Activated CD4-positive, alpha-beta memory T cell treated with anti-CD3 and anti-CD28 coated beads for 36 hours (primary cell): ENCODE measurements at regions of chr4 and their contacts with region 1.

Region 1: DNA sequence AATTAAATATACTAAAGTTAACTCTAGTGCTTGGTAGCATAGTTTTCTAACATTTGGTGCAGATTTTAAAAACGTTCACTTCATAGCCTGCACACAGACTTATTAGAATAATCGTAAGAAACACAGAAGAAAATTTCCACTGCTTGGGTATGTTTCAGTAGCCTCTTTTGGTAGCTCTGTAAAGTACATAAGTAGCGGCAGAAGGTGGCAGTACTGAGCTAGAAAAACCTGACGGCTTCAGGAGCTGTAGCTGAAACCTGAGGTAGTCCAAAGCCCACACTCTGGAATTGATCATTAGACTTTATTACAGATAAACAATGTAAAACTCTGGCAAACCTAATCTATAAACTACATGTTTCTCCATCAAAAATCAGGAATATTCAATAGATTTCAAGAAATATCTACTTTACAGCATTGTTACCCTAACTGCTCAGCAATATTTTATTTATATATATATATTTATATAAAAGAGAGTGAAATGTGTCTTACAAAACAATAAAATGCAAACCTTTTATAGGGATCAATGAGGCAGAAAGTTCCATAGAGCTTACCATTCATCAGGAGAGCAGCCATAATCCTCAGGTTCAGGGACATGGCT is 88.2 kb downstream of the ATP8A1 start:
- DNase-seq: peak; percentile 63
- H3K4me3 Mint-ChIP-seq: no peak overlapping the region
- H3K27ac Mint-ChIP-seq: no peak overlapping the region
- H3K4me1 Mint-ChIP-seq: no peaks in the 10 kb centered on the region
- H3K27me3 Mint-ChIP-seq: no peaks in the 10 kb centered on the region

Region 2: DNA sequence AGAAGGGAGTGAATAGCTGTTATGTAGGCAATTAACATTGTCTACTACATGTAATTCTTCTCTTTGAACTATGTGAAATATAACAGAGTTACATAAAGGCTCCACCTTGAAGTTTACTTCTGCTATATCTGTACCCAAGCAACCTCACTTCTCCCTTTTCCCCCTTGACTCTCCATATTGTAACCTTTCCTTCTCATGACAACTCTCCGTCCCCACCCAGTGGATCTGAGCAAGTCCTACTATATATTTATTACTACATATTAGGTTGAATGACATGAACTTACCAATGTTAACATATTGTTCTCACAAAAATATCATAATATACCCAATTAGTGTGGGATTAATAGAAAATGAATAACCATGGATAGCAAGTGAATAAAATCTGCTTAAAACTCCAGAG is 181.4 kb after region 1 on chr4:
- CTCF ChIA-PET with region 1: interaction called, 12 read pairs
- POLR2A ChIA-PET with region 1: no interaction called
- intact Hi-C with region 1: loop called (anchors 1 kb)
- DNase-seq: no peak
- H3K4me3 Mint-ChIP-seq: no peak overlapping the region
- H3K27ac Mint-ChIP-seq: no peak overlapping the region
- H3K4me1 Mint-ChIP-seq: no peaks in the 10 kb centered on the region
- H3K27me3 Mint-ChIP-seq: no peaks in the 10 kb centered on the region

Region 3: GRCh38 chr4:42768125-42768748 is 199.5 kb after region 1 on chr4:
- CTCF ChIA-PET with region 1: interaction called, 31 read pairs
- POLR2A ChIA-PET with region 1: no interaction called
- intact Hi-C with region 1: loop called (anchors 1 kb)
- DNase-seq: peak; percentile 28
- H3K4me3 Mint-ChIP-seq: no peak overlapping the region
- H3K27ac Mint-ChIP-seq: no peak overlapping the region
- H3K4me1 Mint-ChIP-seq: no peaks in the 10 kb centered on the region
- H3K27me3 Mint-ChIP-seq: peaks cover 4% of the 10 kb centered on the region

Region 4: GRCh38 chr4:42816189-42816879 is 247.6 kb after region 1 on chr4:
- CTCF ChIA-PET with region 1: interaction called, 36 read pairs
- POLR2A ChIA-PET with region 1: no interaction called
- intact Hi-C with region 1: no loop called
- DNase-seq: no peak
- H3K4me3 Mint-ChIP-seq: no peak overlapping the region
- H3K27ac Mint-ChIP-seq: no peak overlapping the region
- H3K4me1 Mint-ChIP-seq: no peaks in the 10 kb centered on the region
- H3K27me3 Mint-ChIP-seq: peaks cover 3% of the 10 kb centered on the region

Region 5: DNA sequence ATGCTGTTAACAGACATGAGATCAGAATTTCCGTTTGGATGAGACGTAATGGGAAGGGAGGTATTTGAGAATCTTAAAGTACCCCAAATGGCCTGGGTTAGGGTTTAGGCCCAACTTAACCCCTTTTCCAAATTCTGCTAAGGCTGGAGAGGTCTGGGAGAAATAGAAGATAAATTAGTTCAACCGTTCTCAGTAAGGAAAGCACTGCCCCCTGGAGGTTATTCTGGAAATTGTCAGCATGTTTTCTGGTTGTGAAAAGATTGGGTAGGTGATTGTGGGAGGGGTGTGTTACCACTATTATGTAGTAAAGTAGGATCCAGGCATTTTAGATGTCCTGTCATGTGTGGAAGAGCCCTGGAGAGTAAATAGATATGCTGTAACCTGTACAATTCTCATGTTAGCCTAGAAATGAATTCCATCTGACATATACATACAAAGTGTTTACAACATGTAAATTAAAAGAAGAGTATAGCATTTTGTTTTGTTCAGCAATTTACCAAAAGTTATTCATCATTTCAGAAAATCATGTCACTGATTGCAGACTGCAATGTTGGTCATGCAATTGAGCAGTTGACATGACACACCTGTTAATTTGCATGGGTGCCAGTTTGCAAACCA is 297.0 kb after region 1 on chr4:
- CTCF ChIA-PET with region 1: interaction called, 42 read pairs
- POLR2A ChIA-PET with region 1: no interaction called
- intact Hi-C with region 1: loop called (anchors 1 kb)
- DNase-seq: peak; percentile 43
- H3K4me3 Mint-ChIP-seq: no peak overlapping the region
- H3K27ac Mint-ChIP-seq: no peak overlapping the region
- H3K4me1 Mint-ChIP-seq: no peaks in the 10 kb centered on the region
- H3K27me3 Mint-ChIP-seq: peaks cover 21% of the 10 kb centered on the region